CD8-positive, alpha-beta T cell (primary cell): ENCODE measurements at regions of chr2 and their contacts with region 1.

Region 1: DNA sequence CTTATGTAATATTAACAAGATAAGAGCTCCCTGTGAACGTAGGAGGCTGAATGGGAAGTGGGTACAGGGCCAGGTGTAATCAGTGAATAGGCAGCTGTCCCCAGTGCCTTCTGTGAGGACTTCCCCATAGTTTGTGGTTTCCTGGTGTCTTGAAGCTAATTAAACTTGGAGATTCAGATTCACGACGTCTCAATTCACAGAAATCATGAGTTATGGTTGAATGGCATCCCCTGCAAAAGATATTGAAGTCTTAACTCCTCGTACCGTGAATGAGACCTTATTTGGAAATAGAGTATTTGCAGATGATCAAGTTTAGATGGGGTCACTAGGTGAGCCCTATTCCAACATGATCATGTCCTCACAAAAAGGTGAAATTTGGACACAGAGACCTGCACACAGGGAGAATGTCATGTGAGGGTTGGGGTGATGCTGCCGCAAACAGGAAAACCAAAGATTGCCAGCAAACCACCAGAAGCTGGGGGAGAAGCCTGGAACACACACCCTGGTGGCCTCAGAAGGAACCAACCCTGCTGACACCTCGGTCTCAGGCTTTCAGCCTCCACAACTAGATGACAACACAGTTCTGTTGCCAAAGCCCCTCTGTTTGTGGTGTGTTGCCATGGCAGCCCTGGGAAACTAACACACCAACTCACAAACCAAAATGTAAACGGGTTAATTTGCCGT is 13.2 kb downstream of the ARL4C start:
- DNase-seq: peak; percentile 70 to 97 (median 87)
- ATAC-seq: peak; percentile 76
- H3K4me3 ChIP-seq: peak overlapping the region; percentile 0 to 12
- H3K4me3 Mint-ChIP-seq: peak overlapping the region; percentile 64
- H3K27ac ChIP-seq: peak overlapping the region; percentile 78 to 89
- H3K27ac Mint-ChIP-seq: peak overlapping the region; percentile 98
- H3K4me1 ChIP-seq: peaks cover 62% of the 10 kb centered on the region
- H3K4me1 Mint-ChIP-seq: peaks cover 84% of the 10 kb centered on the region
- H3K27me3 ChIP-seq: no peaks in the 10 kb centered on the region
- H3K27me3 Mint-ChIP-seq: no peaks in the 10 kb centered on the region
- CTCF ChIP-seq: peak; percentile 70

Region 2: GRCh38 chr2:234135720-234136221 is 347.9 kb before region 1 on chr2:
- CTCF ChIA-PET with region 1: interaction called, 14 read pairs
- POLR2A ChIA-PET with region 1: interaction called, 3 read pairs
- intact Hi-C with region 1: no loop called
- DNase-seq: peak; percentile 16 to 77 (median 48)
- ATAC-seq: peak; percentile 56
- H3K4me3 ChIP-seq: no peak overlapping the region
- H3K4me3 Mint-ChIP-seq: no peak overlapping the region
- H3K27ac ChIP-seq: no peak overlapping the region
- H3K27ac Mint-ChIP-seq: peak overlapping the region; percentile 64
- H3K4me1 ChIP-seq: peaks cover 25% of the 10 kb centered on the region
- H3K4me1 Mint-ChIP-seq: peaks cover 30% of the 10 kb centered on the region
- H3K27me3 ChIP-seq: no peaks in the 10 kb centered on the region
- H3K27me3 Mint-ChIP-seq: no peaks in the 10 kb centered on the region
- CTCF ChIP-seq: peak; percentile 62

Region 3: DNA sequence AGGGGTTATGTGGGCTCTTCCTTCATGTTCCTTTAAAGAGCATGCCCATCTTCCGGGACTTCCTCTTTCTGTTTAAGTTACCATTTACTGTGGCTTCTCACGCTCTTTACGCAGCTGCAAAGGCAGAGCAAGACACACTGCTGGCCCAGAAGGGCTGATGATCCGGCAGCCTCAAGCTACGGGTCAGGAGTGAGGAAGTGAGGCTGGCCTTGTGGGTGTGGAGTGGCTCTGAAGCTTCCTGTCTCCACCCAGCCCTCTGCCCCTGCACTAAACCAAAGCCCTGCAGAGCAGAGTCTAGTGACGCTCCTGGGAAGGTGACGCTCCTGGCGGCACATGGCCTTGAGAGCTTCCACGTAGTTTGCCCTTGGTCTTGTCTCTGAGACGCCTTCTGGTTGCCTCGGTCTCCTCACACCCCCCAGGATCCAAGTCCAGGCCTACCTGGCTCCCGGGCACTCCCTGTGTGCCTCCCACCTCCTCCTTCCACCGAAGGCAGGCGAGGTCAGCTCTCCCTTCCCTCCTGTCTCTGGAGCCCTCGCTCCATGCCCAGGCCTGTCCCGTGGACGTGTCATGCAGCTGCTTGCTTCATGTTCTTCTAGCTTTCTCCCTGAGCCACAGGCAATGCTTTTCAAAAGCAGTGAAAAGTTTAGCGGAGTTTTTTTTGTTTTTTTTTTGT is 37.2 kb before region 1 on chr2:
- CTCF ChIA-PET with region 1: interaction called, 6 read pairs
- POLR2A ChIA-PET with region 1: interaction called, 22 read pairs
- intact Hi-C with region 1: no loop called
- DNase-seq: peak; percentile 63 to 97 (median 81)
- ATAC-seq: peak; percentile 84
- H3K4me3 ChIP-seq: no peak overlapping the region
- H3K4me3 Mint-ChIP-seq: peak overlapping the region; percentile 70
- H3K27ac ChIP-seq: peak overlapping the region; percentile 90 to 94
- H3K27ac Mint-ChIP-seq: peak overlapping the region; percentile 98
- H3K4me1 ChIP-seq: peaks cover 82% of the 10 kb centered on the region
- H3K4me1 Mint-ChIP-seq: peaks cover 84% of the 10 kb centered on the region
- H3K27me3 ChIP-seq: no peaks in the 10 kb centered on the region
- H3K27me3 Mint-ChIP-seq: no peaks in the 10 kb centered on the region
- CTCF ChIP-seq: no peak

Region 4: GRCh38 chr2:234451852-234452625 is 31.7 kb before region 1 on chr2:
- CTCF ChIA-PET with region 1: interaction called, 18 read pairs
- POLR2A ChIA-PET with region 1: interaction called, 22 read pairs
- intact Hi-C with region 1: loop called in 1 of 2 experiments (anchors 2 kb)
- DNase-seq: peak in 2 of 9 experiments; percentile 29 to 55
- ATAC-seq: peak; percentile 14
- H3K4me3 ChIP-seq: peak overlapping the region; percentile 42 to 81
- H3K4me3 Mint-ChIP-seq: peak overlapping the region; percentile 83
- H3K27ac ChIP-seq: peak overlapping the region; percentile 55 to 91
- H3K27ac Mint-ChIP-seq: peak overlapping the region; percentile 91
- H3K4me1 ChIP-seq: peaks cover 73% of the 10 kb centered on the region
- H3K4me1 Mint-ChIP-seq: peaks cover 79% of the 10 kb centered on the region
- H3K27me3 ChIP-seq: no peaks in the 10 kb centered on the region
- H3K27me3 Mint-ChIP-seq: no peaks in the 10 kb centered on the region
- CTCF ChIP-seq: no peak

Region 5: GRCh38 chr2:234463626-234464290 is 20.0 kb before region 1 on chr2:
- CTCF ChIA-PET with region 1: interaction called, 9 read pairs
- POLR2A ChIA-PET with region 1: interaction called, 15 read pairs
- intact Hi-C with region 1: loop called (anchors 1 kb)
- DNase-seq: peak; percentile 58 to 92 (median 75)
- ATAC-seq: peak; percentile 87
- H3K4me3 ChIP-seq: peak overlapping the region; percentile 9 to 36
- H3K4me3 Mint-ChIP-seq: peak overlapping the region; percentile 50
- H3K27ac ChIP-seq: peak overlapping the region; percentile 85 to 94
- H3K27ac Mint-ChIP-seq: peak overlapping the region; percentile 94
- H3K4me1 ChIP-seq: peaks cover 63% of the 10 kb centered on the region
- H3K4me1 Mint-ChIP-seq: peaks cover 67% of the 10 kb centered on the region
- H3K27me3 ChIP-seq: no peaks in the 10 kb centered on the region
- H3K27me3 Mint-ChIP-seq: no peaks in the 10 kb centered on the region
- CTCF ChIP-seq: no peak

Region 6: DNA sequence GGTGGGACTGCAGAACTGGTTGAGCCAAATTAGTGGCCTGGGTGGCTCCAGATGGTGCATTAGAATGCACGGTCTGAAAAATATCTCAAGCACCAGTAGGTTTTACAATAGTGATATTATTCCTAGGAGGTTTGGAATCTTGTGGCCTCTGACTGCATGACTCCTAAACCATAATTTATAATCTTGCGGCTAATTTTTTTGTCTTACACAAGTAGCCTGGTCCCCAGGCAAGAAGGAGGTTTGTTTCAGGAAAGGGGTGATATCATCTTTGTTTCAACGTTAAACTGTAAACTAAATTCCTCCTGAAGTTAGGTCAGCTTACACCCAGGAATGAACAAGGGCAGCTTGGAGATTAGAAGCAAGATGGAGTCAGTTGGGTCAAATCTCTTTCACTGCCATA is 112.1 kb after region 1 on chr2:
- CTCF ChIA-PET with region 1: no interaction called
- POLR2A ChIA-PET with region 1: no interaction called
- intact Hi-C with region 1: no loop called
- DNase-seq: no peak
- ATAC-seq: no peak
- H3K4me3 ChIP-seq: no peak overlapping the region
- H3K4me3 Mint-ChIP-seq: no peak overlapping the region
- H3K27ac ChIP-seq: no peak overlapping the region
- H3K27ac Mint-ChIP-seq: no peak overlapping the region
- H3K4me1 ChIP-seq: no peaks in the 10 kb centered on the region
- H3K4me1 Mint-ChIP-seq: no peaks in the 10 kb centered on the region
- H3K27me3 ChIP-seq: no peaks in the 10 kb centered on the region
- H3K27me3 Mint-ChIP-seq: peaks cover 7% of the 10 kb centered on the region
- CTCF ChIP-seq: no peak